Natural killer cell (primary cell): ENCODE measurements at regions of chr6 and their contacts with region 1.

Region 1: GRCh38 chr6:112043032-112044007 is 10.6 kb upstream of the CCN6 start:
- DNase-seq: peak; percentile 85 to 96
- ATAC-seq: peak; percentile 92 to 94 (median 93)
- H3K4me3 ChIP-seq: peak overlapping the region; percentile 77
- H3K4me3 Mint-ChIP-seq: peak overlapping the region; percentile 99
- H3K27ac ChIP-seq: peak overlapping the region; percentile 91
- H3K27ac Mint-ChIP-seq: peak overlapping the region; percentile 96 to 97
- H3K4me1 ChIP-seq: no peaks in the 10 kb centered on the region
- H3K4me1 Mint-ChIP-seq: peaks cover 10 to 12% of the 10 kb centered on the region in 2 donors
- H3K27me3 ChIP-seq: no peaks in the 10 kb centered on the region
- H3K27me3 Mint-ChIP-seq: no peaks in the 10 kb centered on the region
- CTCF ChIP-seq: peak; percentile 83

Region 2: DNA sequence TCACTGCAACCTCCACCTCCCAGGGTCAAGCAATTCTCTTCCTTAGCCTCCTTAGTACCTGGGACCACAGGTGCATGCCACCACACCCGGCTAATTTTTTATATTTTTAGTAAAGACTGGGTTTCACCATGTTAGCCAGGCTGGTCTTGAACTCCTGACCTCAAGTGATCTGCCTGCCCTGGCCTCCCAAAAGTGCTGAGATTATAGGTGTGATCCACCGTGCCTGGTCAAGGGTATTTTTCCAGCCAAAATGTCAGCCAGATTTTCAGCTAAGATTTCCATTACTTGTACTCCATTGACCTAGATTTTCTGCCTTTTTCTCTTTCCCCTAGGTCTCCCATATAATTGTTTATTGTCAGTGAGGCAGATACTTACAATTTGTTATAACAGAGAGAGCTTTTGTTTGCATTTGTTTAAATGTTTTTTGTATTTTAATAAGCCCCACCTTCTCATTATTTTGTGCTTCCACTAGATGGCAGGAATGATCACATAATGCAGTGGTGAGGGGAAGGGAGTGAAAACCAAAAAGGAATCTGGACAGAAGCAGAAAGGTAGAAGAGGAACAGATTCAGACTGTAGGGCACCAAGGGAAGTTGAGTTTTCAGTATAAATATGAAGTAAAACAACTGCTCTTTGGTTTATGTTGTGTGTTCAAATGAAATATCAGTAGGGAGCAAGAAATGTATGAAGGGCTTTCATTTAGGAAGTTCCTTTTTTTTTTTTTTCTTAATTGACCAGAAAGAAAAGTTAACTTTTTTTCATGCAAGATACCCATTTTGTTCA is 1031.8 kb before region 1 on chr6:
- intact Hi-C with region 1: loop called (anchors 1 kb)
- DNase-seq: peak in 1 of 2 donors; percentile 66
- ATAC-seq: peak in 2 of 3 donors; percentile 66 to 68
- H3K4me3 ChIP-seq: no peak overlapping the region
- H3K4me3 Mint-ChIP-seq: no peak overlapping the region
- H3K27ac ChIP-seq: no peak overlapping the region
- H3K27ac Mint-ChIP-seq: no peak overlapping the region
- H3K4me1 ChIP-seq: no peaks in the 10 kb centered on the region
- H3K4me1 Mint-ChIP-seq: peaks cover 0 to 6% of the 10 kb centered on the region in 2 donors
- H3K27me3 ChIP-seq: no peaks in the 10 kb centered on the region
- H3K27me3 Mint-ChIP-seq: no peaks in the 10 kb centered on the region
- CTCF ChIP-seq: peak; percentile 66

Region 3: DNA sequence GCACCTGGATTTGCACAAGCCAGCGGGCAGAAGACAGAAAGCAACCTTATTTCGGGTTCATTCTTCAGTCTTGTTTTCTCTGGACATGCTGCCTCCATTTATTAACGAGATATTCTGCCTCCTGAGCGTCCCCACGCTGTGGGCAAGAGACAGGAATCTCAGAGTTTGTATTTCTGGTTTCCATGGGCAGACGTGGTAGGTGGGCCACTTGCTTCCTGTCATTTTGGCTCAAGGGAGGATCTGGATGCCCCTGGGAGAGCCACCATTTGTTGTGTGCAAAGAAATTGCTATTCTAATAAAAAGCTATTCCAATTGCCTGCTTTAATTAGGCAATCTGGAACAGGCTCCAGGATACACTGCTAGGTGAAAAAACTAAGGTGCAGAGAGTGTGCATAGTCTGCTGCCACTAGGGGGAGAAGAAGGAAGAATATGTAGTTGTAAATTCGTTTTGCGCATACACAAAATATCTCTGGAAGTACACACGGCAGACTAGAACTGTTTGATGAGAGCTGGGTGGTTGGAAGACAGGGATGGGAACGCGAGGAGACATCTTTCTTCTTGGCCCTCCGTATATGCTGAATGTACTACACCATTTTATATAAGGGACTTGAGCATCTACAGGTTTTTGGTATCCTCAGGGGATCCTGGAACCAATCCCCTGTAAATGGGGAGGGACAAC is 986.1 kb before region 1 on chr6:
- intact Hi-C with region 1: loop called (anchors 2 kb)
- DNase-seq: peak in 1 of 2 donors; percentile 69
- ATAC-seq: peak in 2 of 3 donors; percentile 47 to 60
- H3K4me3 ChIP-seq: no peak overlapping the region
- H3K4me3 Mint-ChIP-seq: no peak overlapping the region
- H3K27ac ChIP-seq: no peak overlapping the region
- H3K27ac Mint-ChIP-seq: no peak overlapping the region
- H3K4me1 ChIP-seq: no peaks in the 10 kb centered on the region
- H3K4me1 Mint-ChIP-seq: no peaks in the 10 kb centered on the region
- H3K27me3 ChIP-seq: no peaks in the 10 kb centered on the region
- H3K27me3 Mint-ChIP-seq: peaks cover 4 to 10% of the 10 kb centered on the region in 2 donors
- CTCF ChIP-seq: peak; percentile 57

Region 4: GRCh38 chr6:111259089-111259831 is 784.1 kb before region 1 on chr6:
- intact Hi-C with region 1: loop called (anchors 1 kb)
- DNase-seq: peak; percentile 99 to 100
- ATAC-seq: peak; percentile 94 to 100 (median 97)
- H3K4me3 ChIP-seq: peak overlapping the region; percentile 70
- H3K4me3 Mint-ChIP-seq: peak overlapping the region; percentile 84
- H3K27ac ChIP-seq: peak overlapping the region; percentile 91
- H3K27ac Mint-ChIP-seq: peak overlapping the region; percentile 86 to 87
- H3K4me1 ChIP-seq: peaks cover 17% of the 10 kb centered on the region
- H3K4me1 Mint-ChIP-seq: peaks cover 9 to 20% of the 10 kb centered on the region in 2 donors
- H3K27me3 ChIP-seq: no peaks in the 10 kb centered on the region
- H3K27me3 Mint-ChIP-seq: peaks cover 4 to 8% of the 10 kb centered on the region in 2 donors
- CTCF ChIP-seq: peak; percentile 81

Region 5: GRCh38 chr6:111399626-111400025 is 643.7 kb before region 1 on chr6:
- intact Hi-C with region 1: no loop called
- DNase-seq: no peak
- ATAC-seq: no peak
- H3K4me3 ChIP-seq: no peak overlapping the region
- H3K4me3 Mint-ChIP-seq: no peak overlapping the region
- H3K27ac ChIP-seq: no peak overlapping the region
- H3K27ac Mint-ChIP-seq: no peak overlapping the region
- H3K4me1 ChIP-seq: no peaks in the 10 kb centered on the region
- H3K4me1 Mint-ChIP-seq: no peaks in the 10 kb centered on the region
- H3K27me3 ChIP-seq: no peaks in the 10 kb centered on the region
- H3K27me3 Mint-ChIP-seq: no peaks in the 10 kb centered on the region
- CTCF ChIP-seq: no peak

Region 6: DNA sequence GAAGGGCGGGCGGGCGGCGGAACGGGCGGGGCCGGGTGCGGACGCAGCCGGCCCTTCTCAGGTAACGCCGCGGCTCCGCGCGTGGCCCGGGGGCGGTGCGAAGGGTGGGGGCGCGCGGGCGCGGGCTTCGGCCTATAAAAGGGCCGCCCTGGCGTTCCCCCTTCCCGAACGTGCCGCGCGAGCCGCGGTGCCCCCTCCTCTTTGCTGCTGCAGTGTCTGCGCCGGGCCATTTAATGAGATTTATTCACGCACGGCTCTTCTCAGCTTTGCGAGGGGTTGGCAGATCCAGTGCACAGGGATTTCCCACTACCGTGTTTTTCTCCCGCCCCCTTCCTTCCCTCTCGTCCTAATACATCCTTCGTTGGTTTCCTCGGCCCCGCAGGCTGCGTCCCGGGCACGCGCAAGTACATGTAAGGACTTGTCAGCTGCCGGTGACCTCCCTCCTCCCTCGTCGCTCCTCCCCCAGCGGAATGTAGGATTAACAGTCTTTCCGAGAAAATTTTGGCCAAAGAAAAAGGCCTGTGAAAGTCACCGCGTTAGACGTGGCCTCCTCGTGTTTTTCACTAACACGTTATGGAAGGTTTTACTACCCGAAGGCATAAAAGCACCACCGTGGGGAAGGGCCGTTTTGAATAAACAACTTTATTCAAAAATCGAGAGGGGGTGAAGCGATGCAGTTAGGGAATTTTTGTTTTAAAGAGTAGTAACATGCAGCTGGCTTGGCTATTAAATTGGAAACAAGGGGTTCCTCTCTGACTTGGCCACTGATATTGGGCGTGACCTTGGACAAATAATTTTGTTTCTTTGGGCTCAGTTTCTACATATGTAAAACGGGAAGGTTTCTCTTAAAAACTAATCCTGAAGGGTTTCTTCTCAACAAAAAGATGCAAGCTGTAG is 559.3 kb before region 1 on chr6:
- intact Hi-C with region 1: loop called (anchors 10 kb)
- DNase-seq: peak in 1 of 2 donors; percentile 92
- ATAC-seq: peak; percentile 34 to 82 (median 61)
- H3K4me3 ChIP-seq: peak overlapping the region; percentile 90
- H3K4me3 Mint-ChIP-seq: peak overlapping the region; percentile 96
- H3K27ac ChIP-seq: peak overlapping the region; percentile 97
- H3K27ac Mint-ChIP-seq: peak overlapping the region; percentile 96 to 98
- H3K4me1 ChIP-seq: peaks cover 9% of the 10 kb centered on the region
- H3K4me1 Mint-ChIP-seq: peaks cover 44 to 45% of the 10 kb centered on the region in 2 donors
- H3K27me3 ChIP-seq: no peaks in the 10 kb centered on the region
- H3K27me3 Mint-ChIP-seq: no peaks in the 10 kb centered on the region
- CTCF ChIP-seq: no peak

Region 7: GRCh38 chr6:111709615-111710398 is 333.5 kb before region 1 on chr6:
- intact Hi-C with region 1: loop called (anchors 1 kb)
- DNase-seq: peak in 1 of 2 donors; percentile 86
- ATAC-seq: peak; percentile 81
- H3K4me3 ChIP-seq: no peak overlapping the region
- H3K4me3 Mint-ChIP-seq: peak overlapping the region; percentile 58
- H3K27ac ChIP-seq: peak overlapping the region; percentile 56
- H3K27ac Mint-ChIP-seq: peak overlapping the region; percentile 98 to 100
- H3K4me1 ChIP-seq: peaks cover 44% of the 10 kb centered on the region
- H3K4me1 Mint-ChIP-seq: peaks cover 53 to 61% of the 10 kb centered on the region in 2 donors
- H3K27me3 ChIP-seq: no peaks in the 10 kb centered on the region
- H3K27me3 Mint-ChIP-seq: no peaks in the 10 kb centered on the region
- CTCF ChIP-seq: peak; percentile 76

Region 8: DNA sequence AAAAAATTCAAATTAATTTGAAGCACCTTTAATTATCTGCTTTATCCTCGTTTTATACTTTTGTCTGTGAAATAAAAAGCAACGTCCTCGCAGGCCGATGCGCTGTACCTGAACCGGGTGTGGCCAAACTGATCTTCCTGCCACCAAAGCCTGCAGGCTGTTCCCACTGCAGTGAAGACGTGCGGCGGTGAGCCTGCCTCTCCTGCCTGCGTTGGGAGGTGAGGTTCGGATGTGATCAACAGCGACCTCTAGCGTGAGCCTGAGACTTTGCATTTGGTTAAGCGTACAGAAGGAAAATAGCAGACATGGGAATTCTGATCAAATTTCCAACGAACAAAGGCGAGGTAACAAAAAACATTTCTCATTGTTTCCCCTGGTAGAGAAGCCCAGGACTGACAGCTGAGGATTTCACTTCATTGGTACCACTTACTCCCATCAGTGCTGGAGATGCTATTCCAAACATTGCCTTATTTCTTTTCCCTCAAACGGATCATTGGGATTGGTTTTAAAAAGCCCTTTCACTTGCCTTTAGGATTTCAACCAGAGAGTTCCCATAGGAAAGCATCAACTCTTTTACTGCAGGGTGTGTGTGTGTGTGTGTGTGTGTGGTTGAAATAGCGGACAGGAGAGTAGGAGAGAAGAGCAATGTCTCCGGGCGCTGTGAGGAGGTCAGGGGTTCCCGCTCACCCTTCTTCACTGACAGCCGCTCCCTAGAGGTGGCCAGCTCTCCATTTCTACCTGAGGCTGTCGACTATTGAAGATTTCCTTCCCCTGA is 46.1 kb before region 1 on chr6:
- intact Hi-C with region 1: loop called (anchors 2 kb)
- DNase-seq: peak; percentile 66 to 93
- ATAC-seq: peak; percentile 81 to 90 (median 86)
- H3K4me3 ChIP-seq: no peak overlapping the region
- H3K4me3 Mint-ChIP-seq: peak overlapping the region; percentile 18
- H3K27ac ChIP-seq: no peak overlapping the region
- H3K27ac Mint-ChIP-seq: peak overlapping the region; percentile 27 to 61
- H3K4me1 ChIP-seq: peaks cover 23% of the 10 kb centered on the region
- H3K4me1 Mint-ChIP-seq: peaks cover 30 to 33% of the 10 kb centered on the region in 2 donors
- H3K27me3 ChIP-seq: no peaks in the 10 kb centered on the region
- H3K27me3 Mint-ChIP-seq: no peaks in the 10 kb centered on the region
- CTCF ChIP-seq: peak; percentile 94

Region 9: GRCh38 chr6:112061605-112062004 is 18.3 kb after region 1 on chr6:
- intact Hi-C with region 1: no loop called
- DNase-seq: no peak
- ATAC-seq: no peak
- H3K4me3 ChIP-seq: no peak overlapping the region
- H3K4me3 Mint-ChIP-seq: no peak overlapping the region
- H3K27ac ChIP-seq: no peak overlapping the region
- H3K27ac Mint-ChIP-seq: no peak overlapping the region
- H3K4me1 ChIP-seq: no peaks in the 10 kb centered on the region
- H3K4me1 Mint-ChIP-seq: no peaks in the 10 kb centered on the region
- H3K27me3 ChIP-seq: peaks cover 2% of the 10 kb centered on the region
- H3K27me3 Mint-ChIP-seq: peaks cover 0 to 8% of the 10 kb centered on the region in 2 donors
- CTCF ChIP-seq: no peak